GM12878 (cell line): ENCODE measurements at regions of chr2 and their contacts with region 1.

Region 1: GRCh38 chr2:121319953-121320352 is 35.0 kb upstream of the TFCP2L1 start:
- DNase-seq: no peak
- ATAC-seq: no peak
- H3K4me3 ChIP-seq: no peak overlapping the region
- H3K27ac ChIP-seq: no peak overlapping the region
- H3K4me1 ChIP-seq: no peaks in the 10 kb centered on the region
- H3K27me3 ChIP-seq: peaks cover 0 to 1% of the 10 kb centered on the region in 2 experiments; a peak in 1 of 4 replicates
- CTCF ChIP-seq: no peak
- EP300 ChIP-seq: no peak
- POLR2A ChIP-seq: no peak
- RAD21 ChIP-seq: no peak

Region 2: GRCh38 chr2:119862127-119862889 is 1457.6 kb before region 1 on chr2:
- CTCF ChIA-PET with region 1: no interaction called
- POLR2A ChIA-PET with region 1: no interaction called
- RAD21 ChIA-PET with region 1: no interaction called
- SMC1A ChIA-PET with region 1: no interaction called
- in situ Hi-C with region 1: no loop called
- intact Hi-C with region 1: no loop called
- DNase-seq: peak; percentile 52
- ATAC-seq: peak; percentile 92
- H3K4me3 ChIP-seq: 0 out of 2 replicates have a peak overlapping the region, but pooled peaks have one; percentile 31
- H3K27ac ChIP-seq: peak overlapping the region; percentile 64
- H3K4me1 ChIP-seq: peaks cover 22% of the 10 kb centered on the region; the same call in 1 of the 2 replicates
- H3K27me3 ChIP-seq: no peaks in the 10 kb centered on the region
- CTCF ChIP-seq: no peak
- EP300 ChIP-seq: peak in 1 of 2 experiments; percentile 29; a peak in 1 of 4 replicates
- POLR2A ChIP-seq: no peak
- RAD21 ChIP-seq: no peak

Region 3: DNA sequence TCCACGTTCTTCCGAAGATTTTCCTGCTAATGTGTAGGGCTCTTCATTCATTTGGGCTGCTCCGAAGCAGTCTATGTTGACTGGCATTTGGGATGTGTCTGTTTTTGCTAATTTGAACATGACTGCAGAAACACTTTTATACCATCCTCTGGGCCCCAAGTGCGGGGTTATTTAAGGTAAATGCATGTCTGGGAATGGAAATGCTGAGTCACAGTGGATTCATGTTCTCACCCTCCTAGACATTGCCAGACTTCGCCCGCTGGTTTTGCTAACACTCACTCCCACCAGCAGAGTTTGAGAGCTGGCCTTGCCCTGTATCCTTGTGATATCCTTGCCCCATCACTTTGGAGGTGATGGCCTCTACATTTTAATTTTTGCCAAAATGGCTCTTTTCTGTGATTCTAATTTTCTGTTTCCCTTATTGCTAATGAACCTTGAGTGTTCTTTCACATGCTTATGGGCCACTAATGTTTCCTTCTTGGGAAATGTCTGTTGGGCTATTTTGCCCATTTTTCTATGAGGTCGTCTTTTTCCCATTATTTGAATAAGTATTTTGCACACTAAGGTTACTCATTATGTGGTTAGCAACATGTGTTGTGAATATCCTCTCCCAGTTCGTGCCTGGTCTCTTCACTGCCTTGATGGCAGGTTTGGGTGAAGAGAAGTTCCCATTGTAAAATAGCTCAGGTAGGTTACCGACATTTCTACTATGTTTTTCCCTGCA is 380.2 kb before region 1 on chr2:
- CTCF ChIA-PET with region 1: no interaction called
- POLR2A ChIA-PET with region 1: no interaction called
- RAD21 ChIA-PET with region 1: no interaction called
- SMC1A ChIA-PET with region 1: no interaction called
- in situ Hi-C with region 1: no loop called
- intact Hi-C with region 1: no loop called
- DNase-seq: no peak
- ATAC-seq: no peak
- H3K4me3 ChIP-seq: no peak overlapping the region
- H3K27ac ChIP-seq: no peak overlapping the region
- H3K4me1 ChIP-seq: no peaks in the 10 kb centered on the region
- H3K27me3 ChIP-seq: no peaks in the 10 kb centered on the region
- CTCF ChIP-seq: no peak
- EP300 ChIP-seq: no peak
- POLR2A ChIP-seq: no peak
- RAD21 ChIP-seq: no peak

Region 4: DNA sequence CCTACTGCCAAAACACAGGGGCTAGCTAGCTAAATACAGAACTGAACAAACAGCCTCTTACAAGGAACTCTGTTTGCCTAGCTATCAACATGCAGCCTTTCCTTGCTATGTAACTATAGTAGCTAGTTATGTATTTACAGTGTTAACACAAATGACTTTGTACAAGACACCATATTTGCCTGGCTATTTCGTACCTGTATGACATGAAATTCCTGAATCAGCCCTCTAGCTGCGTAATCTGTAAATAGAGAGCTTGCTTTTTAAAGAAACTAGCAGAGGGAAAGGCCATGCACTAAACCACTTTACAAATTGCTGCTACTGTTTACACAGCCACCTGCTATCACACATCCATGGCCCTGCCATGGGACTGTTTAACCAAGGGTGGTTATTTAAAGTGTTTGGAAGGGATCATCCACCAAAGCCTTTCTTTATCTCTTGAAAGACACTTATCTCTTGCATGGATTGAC is 283.7 kb before region 1 on chr2:
- CTCF ChIA-PET with region 1: no interaction called
- POLR2A ChIA-PET with region 1: no interaction called
- RAD21 ChIA-PET with region 1: no interaction called
- SMC1A ChIA-PET with region 1: no interaction called
- in situ Hi-C with region 1: no loop called
- intact Hi-C with region 1: no loop called
- DNase-seq: no peak
- ATAC-seq: no peak
- H3K4me3 ChIP-seq: no peak overlapping the region
- H3K27ac ChIP-seq: no peak overlapping the region
- H3K4me1 ChIP-seq: no peaks in the 10 kb centered on the region
- H3K27me3 ChIP-seq: peaks cover 0 to 5% of the 10 kb centered on the region in 2 experiments; a peak in 3 of 4 replicates
- CTCF ChIP-seq: no peak
- EP300 ChIP-seq: no peak
- POLR2A ChIP-seq: no peak
- RAD21 ChIP-seq: no peak

Region 5: DNA sequence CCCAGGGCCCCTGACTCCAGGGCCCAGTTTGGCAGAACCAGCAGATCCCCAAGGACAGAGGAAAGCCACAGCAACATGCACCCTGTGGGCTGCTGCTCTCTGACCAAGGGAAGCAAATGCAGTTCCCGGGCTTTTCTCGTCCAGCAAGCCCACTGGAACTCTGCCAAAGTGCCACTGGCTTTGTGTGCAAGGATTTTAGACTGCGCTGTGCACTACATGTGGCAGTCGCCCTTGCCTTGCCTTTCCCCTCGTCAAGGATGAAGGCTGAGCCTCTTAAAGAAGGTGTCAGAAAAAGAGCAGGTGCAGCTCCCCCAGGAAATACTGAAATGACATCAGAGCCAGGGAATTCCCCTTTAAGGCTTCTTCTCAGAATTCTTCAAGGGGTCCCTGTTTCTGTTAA is 234.2 kb before region 1 on chr2:
- CTCF ChIA-PET with region 1: interaction called, 3 read pairs
- POLR2A ChIA-PET with region 1: no interaction called
- RAD21 ChIA-PET with region 1: no interaction called
- SMC1A ChIA-PET with region 1: interaction called, 4 read pairs
- in situ Hi-C with region 1: no loop called
- intact Hi-C with region 1: loop called (anchors 2 kb)
- DNase-seq: no peak
- ATAC-seq: peak; percentile 66; the same call in 2 of the 3 replicates
- H3K4me3 ChIP-seq: no peak overlapping the region
- H3K27ac ChIP-seq: no peak overlapping the region
- H3K4me1 ChIP-seq: no peaks in the 10 kb centered on the region
- H3K27me3 ChIP-seq: no peaks in the 10 kb centered on the region; a peak in 1 of 4 replicates
- CTCF ChIP-seq: no peak
- EP300 ChIP-seq: no peak
- POLR2A ChIP-seq: no peak
- RAD21 ChIP-seq: no peak

Region 6: GRCh38 chr2:121095257-121096080 is 224.5 kb before region 1 on chr2:
- CTCF ChIA-PET with region 1: interaction called, 3 read pairs
- POLR2A ChIA-PET with region 1: no interaction called
- RAD21 ChIA-PET with region 1: no interaction called
- SMC1A ChIA-PET with region 1: no interaction called
- in situ Hi-C with region 1: no loop called
- intact Hi-C with region 1: loop called (anchors 2 kb)
- DNase-seq: no peak
- ATAC-seq: peak; percentile 86
- H3K4me3 ChIP-seq: no peak overlapping the region
- H3K27ac ChIP-seq: no peak overlapping the region
- H3K4me1 ChIP-seq: no peaks in the 10 kb centered on the region
- H3K27me3 ChIP-seq: peaks cover 1 to 2% of the 10 kb centered on the region in 2 experiments; a peak in 2 of 4 replicates
- CTCF ChIP-seq: peak; percentile 62 to 69 (median 65)
- EP300 ChIP-seq: no peak
- POLR2A ChIP-seq: no peak
- RAD21 ChIP-seq: peak; percentile 58

Region 7: GRCh38 chr2:121220995-121221394 is 99.0 kb before region 1 on chr2:
- CTCF ChIA-PET with region 1: no interaction called
- POLR2A ChIA-PET with region 1: no interaction called
- RAD21 ChIA-PET with region 1: no interaction called
- SMC1A ChIA-PET with region 1: no interaction called
- in situ Hi-C with region 1: no loop called
- intact Hi-C with region 1: no loop called
- DNase-seq: no peak
- ATAC-seq: no peak
- H3K4me3 ChIP-seq: no peak overlapping the region
- H3K27ac ChIP-seq: no peak overlapping the region
- H3K4me1 ChIP-seq: no peaks in the 10 kb centered on the region
- H3K27me3 ChIP-seq: no peaks in the 10 kb centered on the region; a peak in 2 of 4 replicates
- CTCF ChIP-seq: no peak
- EP300 ChIP-seq: no peak
- POLR2A ChIP-seq: no peak
- RAD21 ChIP-seq: no peak